CD4-positive, alpha-beta T cell (primary cell): ENCODE measurements at regions of chr14 and their contacts with region 1.

Region 1: DNA sequence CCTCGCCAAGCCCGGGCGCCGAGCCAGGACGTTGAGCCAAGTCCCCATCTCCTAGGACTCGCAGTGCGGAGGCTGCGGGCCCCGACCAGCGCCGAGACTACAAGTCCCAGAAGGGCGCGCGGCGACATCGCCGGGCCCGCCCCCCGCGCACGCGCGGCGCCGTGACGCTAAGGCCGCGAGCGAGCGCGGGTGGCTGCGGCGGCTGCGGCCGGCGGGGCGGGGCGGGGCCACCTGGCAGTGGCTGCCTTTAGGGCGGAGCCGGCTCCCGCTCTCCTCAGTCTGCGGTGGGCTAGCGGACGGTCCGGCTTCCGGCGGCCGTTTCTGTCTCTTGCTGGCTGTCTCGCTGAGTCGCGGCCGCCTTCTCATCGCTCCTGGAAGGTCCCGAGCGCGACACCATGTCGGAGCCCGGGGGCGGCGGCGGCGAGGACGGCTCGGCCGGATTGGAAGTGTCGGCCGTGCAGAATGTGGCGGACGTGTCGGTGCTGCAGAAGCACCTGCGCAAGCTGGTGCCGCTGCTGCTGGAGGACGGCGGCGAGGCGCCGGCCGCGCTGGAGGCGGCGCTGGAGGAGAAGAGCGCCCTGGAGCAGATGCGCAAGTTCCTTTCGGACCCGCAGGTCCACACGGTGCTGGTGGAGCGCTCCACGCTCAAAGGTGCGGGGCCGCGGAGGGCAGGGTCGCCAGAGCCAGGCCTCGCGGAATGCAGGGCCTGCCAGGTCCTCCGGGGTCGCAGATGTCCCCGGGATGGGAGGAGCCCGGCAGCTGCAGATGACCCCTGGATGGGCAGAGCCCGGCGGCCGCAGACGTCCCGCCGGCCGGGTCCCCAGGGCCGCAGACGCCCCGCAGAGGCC is at the start of gene DYNC1H1:
- DNase-seq: peak; percentile 75 to 96 (median 86)
- ATAC-seq: peak; percentile 83
- H3K4me3 ChIP-seq: peak within 1 kb of the TSS; percentile 86
- H3K4me3 Mint-ChIP-seq: peak within 1 kb of the TSS; percentile 93
- H3K27ac ChIP-seq: peak within 1 kb of the TSS; percentile 68 to 82
- H3K27ac Mint-ChIP-seq: peak within 1 kb of the TSS; percentile 85
- H3K4me1 ChIP-seq: peaks cover 44% of the 10 kb centered on the region
- H3K4me1 Mint-ChIP-seq: peaks cover 53% of the 10 kb centered on the region
- H3K27me3 ChIP-seq: no peaks in the 10 kb centered on the region
- H3K27me3 Mint-ChIP-seq: no peaks in the 10 kb centered on the region
- CTCF ChIP-seq: no peak
- total RNA-seq, gene DYNC1H1: 286 to 293 TPM

Region 2: DNA sequence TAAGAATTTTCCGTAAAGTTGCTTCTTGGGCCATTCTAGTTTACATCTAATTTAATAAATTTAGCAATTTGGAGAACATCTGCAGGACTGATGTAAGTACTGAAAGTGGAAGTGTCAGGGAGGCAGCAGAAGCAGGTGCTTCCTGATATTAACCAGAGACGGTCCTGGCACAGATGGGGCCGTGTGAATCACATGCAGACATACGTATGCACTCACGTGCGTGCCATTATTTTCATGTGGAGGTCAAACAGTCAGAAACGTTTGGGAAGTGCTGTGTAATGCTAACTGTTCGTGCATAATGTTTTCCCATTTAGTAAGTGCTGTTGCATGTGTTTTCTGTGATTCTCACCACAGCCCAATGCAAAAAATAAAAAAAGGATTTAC is 88.0 kb before region 1 on chr14:
- CTCF ChIA-PET with region 1: no interaction called
- POLR2A ChIA-PET with region 1: no interaction called
- intact Hi-C with region 1: loop called in 1 of 2 experiments (anchors 1 kb)
- DNase-seq: peak; percentile 34 to 92 (median 64)
- ATAC-seq: peak; percentile 93
- H3K4me3 ChIP-seq: peak overlapping the region; percentile 27
- H3K4me3 Mint-ChIP-seq: peak overlapping the region; percentile 61
- H3K27ac ChIP-seq: peak overlapping the region; percentile 56 to 64
- H3K27ac Mint-ChIP-seq: peak overlapping the region; percentile 79
- H3K4me1 ChIP-seq: peaks cover 60% of the 10 kb centered on the region
- H3K4me1 Mint-ChIP-seq: peaks cover 78% of the 10 kb centered on the region
- H3K27me3 ChIP-seq: no peaks in the 10 kb centered on the region
- H3K27me3 Mint-ChIP-seq: no peaks in the 10 kb centered on the region
- CTCF ChIP-seq: no peak

Region 3: GRCh38 chr14:101947906-101948665 is 16.4 kb before region 1 on chr14:
- CTCF ChIA-PET with region 1: no interaction called
- POLR2A ChIA-PET with region 1: interaction called, 12 read pairs
- intact Hi-C with region 1: loop called in 1 of 2 experiments (anchors 1 kb)
- DNase-seq: peak; percentile 98 to 100 (median 99)
- ATAC-seq: peak; percentile 96
- H3K4me3 ChIP-seq: peak overlapping the region; percentile 78
- H3K4me3 Mint-ChIP-seq: peak overlapping the region; percentile 94
- H3K27ac ChIP-seq: peak overlapping the region; percentile 87 to 93
- H3K27ac Mint-ChIP-seq: peak overlapping the region; percentile 99
- H3K4me1 ChIP-seq: peaks cover 23% of the 10 kb centered on the region
- H3K4me1 Mint-ChIP-seq: peaks cover 18% of the 10 kb centered on the region
- H3K27me3 ChIP-seq: peaks cover 8 to 22% of the 10 kb centered on the region in 2 experiments
- H3K27me3 Mint-ChIP-seq: peaks cover 31% of the 10 kb centered on the region
- CTCF ChIP-seq: no peak

Region 4: GRCh38 chr14:102086972-102087761 is 122.6 kb after region 1 on chr14 and contains the start of gene HSP90AA1:
- CTCF ChIA-PET with region 1: no interaction called
- POLR2A ChIA-PET with region 1: interaction called, 4 read pairs
- intact Hi-C with region 1: loop called (anchors 2 kb)
- DNase-seq: peak; percentile 88 to 98 (median 94)
- ATAC-seq: peak; percentile 77
- H3K4me3 ChIP-seq: peak within 1 kb of the TSS; percentile 74
- H3K4me3 Mint-ChIP-seq: peak within 1 kb of the TSS; percentile 98
- H3K27ac ChIP-seq: peak within 1 kb of the TSS; percentile 95 to 98
- H3K27ac Mint-ChIP-seq: peak within 1 kb of the TSS; percentile 91
- H3K4me1 ChIP-seq: peaks cover 51% of the 10 kb centered on the region
- H3K4me1 Mint-ChIP-seq: peaks cover 64% of the 10 kb centered on the region
- H3K27me3 ChIP-seq: no peaks in the 10 kb centered on the region
- H3K27me3 Mint-ChIP-seq: no peaks in the 10 kb centered on the region
- CTCF ChIP-seq: no peak
- total RNA-seq, gene HSP90AA1: 451 to 462 TPM

Region 5: DNA sequence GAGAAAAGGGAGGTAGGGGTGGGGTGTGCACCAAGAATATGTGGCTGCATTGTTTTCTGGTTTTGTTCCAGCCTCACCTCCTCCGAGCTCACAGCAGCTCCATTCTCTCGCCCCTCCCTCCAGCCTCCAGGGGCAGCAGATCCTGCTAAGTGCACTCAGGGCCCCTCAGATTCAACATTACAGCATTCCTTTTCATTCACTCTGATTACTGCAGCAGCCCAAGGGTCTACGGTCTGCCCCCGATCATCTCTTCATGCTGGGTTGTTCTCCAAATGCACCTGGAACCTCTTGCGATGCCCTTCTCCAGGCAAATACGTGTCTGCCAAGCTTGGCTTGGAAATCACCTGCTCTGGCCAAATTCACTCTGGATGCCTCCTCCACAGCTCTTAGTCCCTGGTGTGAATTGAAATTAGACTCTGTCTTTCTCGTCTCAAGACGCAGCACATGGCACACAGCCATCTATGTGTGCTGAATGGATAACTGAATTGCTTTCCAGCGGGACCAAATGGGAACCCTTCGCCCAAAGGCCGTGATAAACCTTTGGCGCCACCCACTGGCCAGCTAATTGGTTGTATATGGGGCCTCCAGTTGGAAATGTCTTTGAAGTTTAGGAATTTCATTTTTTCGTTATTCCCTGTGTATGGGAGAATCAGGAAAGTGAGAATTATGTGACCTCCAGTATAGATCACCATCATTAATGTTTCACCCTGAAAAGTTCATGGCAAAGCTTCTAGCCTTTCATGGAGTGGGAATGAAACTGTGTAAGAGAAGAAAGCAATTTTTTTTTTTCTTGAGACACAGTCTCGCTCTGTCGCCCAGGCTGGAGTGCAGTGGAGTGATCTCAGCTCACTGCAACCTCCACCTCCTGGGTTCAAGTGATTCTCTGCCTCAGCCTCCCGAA is 131.9 kb after region 1 on chr14:
- CTCF ChIA-PET with region 1: interaction called, 3 read pairs
- POLR2A ChIA-PET with region 1: interaction called, 3 read pairs
- intact Hi-C with region 1: loop called (anchors 1 kb)
- DNase-seq: peak; percentile 51 to 86 (median 66)
- ATAC-seq: peak; percentile 67
- H3K4me3 ChIP-seq: no peak overlapping the region
- H3K4me3 Mint-ChIP-seq: no peak overlapping the region
- H3K27ac ChIP-seq: no peak overlapping the region
- H3K27ac Mint-ChIP-seq: no peak overlapping the region
- H3K4me1 ChIP-seq: peaks cover 5% of the 10 kb centered on the region
- H3K4me1 Mint-ChIP-seq: no peaks in the 10 kb centered on the region
- H3K27me3 ChIP-seq: no peaks in the 10 kb centered on the region
- H3K27me3 Mint-ChIP-seq: no peaks in the 10 kb centered on the region
- CTCF ChIP-seq: peak; percentile 98

Region 6: DNA sequence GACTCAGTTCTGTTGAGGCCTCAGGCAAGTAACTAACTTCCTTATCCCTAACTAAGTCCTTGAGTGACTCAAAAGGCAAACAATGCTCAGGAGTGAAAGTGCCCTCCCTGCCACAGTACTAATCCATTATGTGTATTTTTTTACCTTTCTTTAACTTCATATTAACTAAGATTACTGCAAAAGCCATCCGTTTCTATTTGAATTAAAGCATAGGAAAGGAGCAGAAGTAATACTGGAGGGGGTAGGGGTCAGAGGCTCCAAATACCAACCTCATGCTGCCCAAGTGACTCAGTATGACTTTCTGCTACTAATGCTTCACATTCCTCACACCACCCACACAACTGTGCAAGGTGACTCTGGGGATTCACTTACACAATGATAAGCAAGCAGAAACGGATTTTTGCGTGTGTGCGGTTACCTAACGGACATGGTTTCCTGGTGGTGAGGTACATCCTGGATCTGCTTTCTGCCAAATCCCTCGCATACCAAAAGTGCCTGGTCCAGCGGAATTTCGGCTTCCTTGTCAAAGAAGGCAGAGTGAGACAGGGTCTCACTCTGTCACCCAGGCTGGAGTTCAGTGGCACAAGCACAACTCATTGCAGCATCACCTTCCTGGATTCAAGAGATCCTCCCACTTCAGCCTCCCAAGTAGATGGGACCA is 315.3 kb after region 1 on chr14:
- CTCF ChIA-PET with region 1: no interaction called
- POLR2A ChIA-PET with region 1: no interaction called
- intact Hi-C with region 1: no loop called
- DNase-seq: no peak
- ATAC-seq: no peak
- H3K4me3 ChIP-seq: no peak overlapping the region
- H3K4me3 Mint-ChIP-seq: no peak overlapping the region
- H3K27ac ChIP-seq: no peak overlapping the region
- H3K27ac Mint-ChIP-seq: no peak overlapping the region
- H3K4me1 ChIP-seq: no peaks in the 10 kb centered on the region
- H3K4me1 Mint-ChIP-seq: no peaks in the 10 kb centered on the region
- H3K27me3 ChIP-seq: no peaks in the 10 kb centered on the region
- H3K27me3 Mint-ChIP-seq: no peaks in the 10 kb centered on the region
- CTCF ChIP-seq: no peak

Region 7: GRCh38 chr14:102362545-102363181 is 398.1 kb after region 1 on chr14 and contains the starts of genes CINP and TECPR2:
- CTCF ChIA-PET with region 1: no interaction called
- POLR2A ChIA-PET with region 1: no interaction called
- intact Hi-C with region 1: loop called in 1 of 2 experiments (anchors 2 kb)
- DNase-seq: peak; percentile 92 to 99 (median 96)
- ATAC-seq: peak; percentile 90
- H3K4me3 ChIP-seq: peak within 1 kb of the TSS; percentile 91
- H3K4me3 Mint-ChIP-seq: peak within 1 kb of the TSS; percentile 94
- H3K27ac ChIP-seq: peak within 1 kb of the TSS; percentile 74 to 89
- H3K27ac Mint-ChIP-seq: no peak within 1 kb of the TSS
- H3K4me1 ChIP-seq: peaks cover 27% of the 10 kb centered on the region
- H3K4me1 Mint-ChIP-seq: peaks cover 21% of the 10 kb centered on the region
- H3K27me3 ChIP-seq: no peaks in the 10 kb centered on the region
- H3K27me3 Mint-ChIP-seq: no peaks in the 10 kb centered on the region
- CTCF ChIP-seq: no peak
- total RNA-seq, gene CINP: 12.6 to 14.5 TPM
- total RNA-seq, gene TECPR2: 5.0 to 5.4 TPM

Region 8: DNA sequence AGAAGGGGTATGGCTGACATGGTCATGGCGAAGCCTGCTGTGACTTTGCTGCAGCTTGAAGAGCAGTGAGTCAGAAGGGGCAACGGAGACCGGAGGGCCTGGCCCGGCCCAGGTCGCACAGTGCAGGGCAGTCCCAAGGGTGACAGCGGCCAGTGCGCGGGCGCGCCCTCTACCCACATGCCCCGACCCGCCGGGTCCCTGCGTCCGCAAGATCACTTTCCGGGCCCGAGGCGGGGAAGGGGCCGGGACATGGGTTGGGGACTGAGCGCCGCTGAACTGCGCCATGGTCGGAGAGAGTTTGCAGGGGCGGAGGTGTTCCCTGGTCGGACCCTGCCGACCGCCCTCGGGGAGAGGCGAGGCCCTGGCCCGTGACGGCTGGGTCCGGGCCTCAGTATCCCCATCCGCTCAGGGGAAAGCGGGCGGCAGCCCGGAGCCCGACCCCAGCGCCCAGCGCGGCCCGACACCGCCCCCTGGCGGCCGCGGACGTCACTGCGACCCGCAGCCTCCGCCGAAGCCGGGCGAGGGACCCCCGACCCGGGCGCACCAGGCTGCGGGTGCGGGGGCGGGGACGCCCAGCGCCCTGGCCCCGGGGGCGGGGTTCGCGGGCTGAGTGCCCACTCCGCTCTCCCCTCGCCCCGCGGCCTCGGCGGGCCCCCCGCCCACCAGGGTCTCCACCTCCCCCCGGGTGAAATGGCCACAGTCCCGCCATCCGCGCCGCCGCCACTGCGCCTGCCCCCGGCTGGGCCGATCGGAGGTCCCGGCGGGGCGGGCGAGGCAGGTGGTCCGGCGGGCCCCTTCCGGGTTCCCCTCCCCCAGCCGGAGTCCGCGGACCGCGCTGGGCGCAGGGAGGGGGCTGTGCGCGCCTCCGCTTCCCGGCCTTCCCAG is 552.3 kb after region 1 on chr14:
- CTCF ChIA-PET with region 1: no interaction called
- POLR2A ChIA-PET with region 1: no interaction called
- intact Hi-C with region 1: loop called in 1 of 2 experiments (anchors 5 kb)
- DNase-seq: peak in 13 of 14 experiments; percentile 35 to 81 (median 54)
- ATAC-seq: peak; percentile 87
- H3K4me3 ChIP-seq: peak overlapping the region; percentile 53
- H3K4me3 Mint-ChIP-seq: peak overlapping the region; percentile 90
- H3K27ac ChIP-seq: no peak overlapping the region
- H3K27ac Mint-ChIP-seq: no peak overlapping the region
- H3K4me1 ChIP-seq: peaks cover 12% of the 10 kb centered on the region
- H3K4me1 Mint-ChIP-seq: peaks cover 4% of the 10 kb centered on the region
- H3K27me3 ChIP-seq: no peaks in the 10 kb centered on the region
- H3K27me3 Mint-ChIP-seq: peaks cover 4% of the 10 kb centered on the region
- CTCF ChIP-seq: peak; percentile 72